CD8-positive, alpha-beta T cell (primary cell): ENCODE measurements at regions of chr3 and their contacts with region 1.

Region 1: DNA sequence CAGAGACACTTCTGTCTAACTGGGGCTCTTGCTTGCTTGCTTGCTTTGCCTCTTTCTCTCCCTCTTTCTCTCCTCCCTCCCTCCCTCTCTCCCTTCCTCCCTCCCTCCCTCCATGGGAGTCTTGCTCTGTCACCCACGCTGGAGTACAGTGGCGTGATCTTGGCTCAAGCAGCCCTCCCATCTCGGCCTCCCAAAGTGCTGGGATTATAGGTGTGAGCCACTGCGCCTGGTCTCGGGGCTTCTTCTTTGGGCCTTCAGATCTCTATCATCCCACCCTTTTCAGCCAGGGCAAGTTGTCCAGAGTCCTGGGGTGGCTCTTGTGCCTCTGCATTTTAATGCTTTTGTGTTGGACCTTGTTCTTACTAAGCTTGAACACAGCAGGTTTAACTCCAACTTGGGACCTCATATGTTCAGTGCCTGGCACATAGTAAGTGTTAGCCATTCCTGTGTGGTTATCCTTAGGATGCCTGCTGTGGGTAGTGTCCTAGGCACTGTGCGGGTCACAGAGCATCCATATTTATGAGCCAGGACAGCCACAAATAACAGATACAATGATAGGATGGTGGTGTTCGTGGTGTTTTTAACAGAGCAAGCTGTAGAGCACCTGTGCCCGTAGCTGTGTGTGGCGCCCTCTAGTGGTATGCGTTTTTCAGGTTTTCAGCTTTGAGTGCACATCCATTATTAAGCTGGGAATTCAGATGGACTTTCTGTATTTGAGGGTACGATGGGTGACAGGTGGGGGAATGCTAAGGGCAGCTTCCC is 75.1 kb downstream of the CCK start:
- DNase-seq: peak; percentile 44 to 84 (median 72)
- ATAC-seq: peak; percentile 61
- H3K4me3 ChIP-seq: no peak overlapping the region
- H3K4me3 Mint-ChIP-seq: no peak overlapping the region
- H3K27ac ChIP-seq: no peak overlapping the region
- H3K27ac Mint-ChIP-seq: no peak overlapping the region
- H3K4me1 ChIP-seq: peaks cover 15% of the 10 kb centered on the region
- H3K4me1 Mint-ChIP-seq: peaks cover 12% of the 10 kb centered on the region
- H3K27me3 ChIP-seq: no peaks in the 10 kb centered on the region
- H3K27me3 Mint-ChIP-seq: no peaks in the 10 kb centered on the region
- CTCF ChIP-seq: peak; percentile 90

Region 2: GRCh38 chr3:41893977-41894376 is 296.9 kb before region 1 on chr3:
- CTCF ChIA-PET with region 1: interaction called, 4 read pairs
- POLR2A ChIA-PET with region 1: no interaction called
- intact Hi-C with region 1: loop called in 1 of 2 experiments (anchors 1 kb)
- DNase-seq: peak in 2 of 9 experiments; percentile 48 to 58
- ATAC-seq: no peak
- H3K4me3 ChIP-seq: no peak overlapping the region
- H3K4me3 Mint-ChIP-seq: no peak overlapping the region
- H3K27ac ChIP-seq: no peak overlapping the region
- H3K27ac Mint-ChIP-seq: no peak overlapping the region
- H3K4me1 ChIP-seq: no peaks in the 10 kb centered on the region
- H3K4me1 Mint-ChIP-seq: no peaks in the 10 kb centered on the region
- H3K27me3 ChIP-seq: no peaks in the 10 kb centered on the region
- H3K27me3 Mint-ChIP-seq: no peaks in the 10 kb centered on the region
- CTCF ChIP-seq: peak; percentile 52

Region 3: GRCh38 chr3:42118762-42119361 is 72.0 kb before region 1 on chr3:
- CTCF ChIA-PET with region 1: interaction called, 32 read pairs
- POLR2A ChIA-PET with region 1: no interaction called
- intact Hi-C with region 1: loop called (anchors 1 kb)
- DNase-seq: peak in 2 of 9 experiments; percentile 31 to 49
- ATAC-seq: no peak
- H3K4me3 ChIP-seq: no peak overlapping the region
- H3K4me3 Mint-ChIP-seq: no peak overlapping the region
- H3K27ac ChIP-seq: no peak overlapping the region
- H3K27ac Mint-ChIP-seq: no peak overlapping the region
- H3K4me1 ChIP-seq: no peaks in the 10 kb centered on the region
- H3K4me1 Mint-ChIP-seq: peaks cover 18% of the 10 kb centered on the region
- H3K27me3 ChIP-seq: no peaks in the 10 kb centered on the region
- H3K27me3 Mint-ChIP-seq: no peaks in the 10 kb centered on the region
- CTCF ChIP-seq: no peak

Region 4: GRCh38 chr3:42179110-42179725 is 11.7 kb before region 1 on chr3:
- CTCF ChIA-PET with region 1: interaction called, 19 read pairs
- POLR2A ChIA-PET with region 1: no interaction called
- intact Hi-C with region 1: no loop called
- DNase-seq: no peak
- ATAC-seq: no peak
- H3K4me3 ChIP-seq: no peak overlapping the region
- H3K4me3 Mint-ChIP-seq: no peak overlapping the region
- H3K27ac ChIP-seq: no peak overlapping the region
- H3K27ac Mint-ChIP-seq: peak overlapping the region; percentile 55
- H3K4me1 ChIP-seq: no peaks in the 10 kb centered on the region
- H3K4me1 Mint-ChIP-seq: no peaks in the 10 kb centered on the region
- H3K27me3 ChIP-seq: no peaks in the 10 kb centered on the region
- H3K27me3 Mint-ChIP-seq: no peaks in the 10 kb centered on the region
- CTCF ChIP-seq: no peak

Region 5: DNA sequence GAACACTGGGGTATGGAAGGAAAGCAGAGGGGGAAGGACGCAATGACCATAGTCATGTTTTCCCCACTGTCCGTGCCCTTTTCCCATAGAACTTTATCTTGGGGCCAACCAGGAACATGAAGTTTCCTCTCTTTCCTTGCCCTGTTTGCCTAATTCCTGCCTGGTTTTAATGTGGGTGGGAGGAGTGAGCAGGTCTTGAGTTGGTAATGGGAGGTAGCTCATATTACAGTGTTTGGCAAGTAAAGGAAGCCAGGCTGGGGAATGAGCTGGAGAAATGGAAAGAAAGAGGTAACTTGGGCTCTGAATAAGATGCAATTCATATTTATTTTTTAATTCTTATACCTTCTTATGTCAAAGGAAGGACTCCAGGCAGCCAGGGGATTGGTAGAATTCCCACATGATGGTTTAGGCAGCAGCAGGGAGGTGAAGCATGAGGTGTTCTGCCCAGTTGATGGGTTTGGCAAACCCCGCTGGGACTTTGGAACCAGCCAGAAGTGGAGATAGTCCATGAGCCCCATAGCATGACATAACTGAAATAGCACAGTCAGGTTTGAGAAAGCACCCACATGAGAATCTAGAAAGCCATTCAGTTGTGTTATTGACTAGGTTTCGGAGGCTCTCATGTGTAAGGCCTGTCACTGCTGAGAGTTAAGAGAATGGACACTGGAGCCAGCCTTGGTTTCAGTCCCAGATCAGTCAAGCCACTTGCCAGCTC is 15.1 kb after region 1 on chr3:
- CTCF ChIA-PET with region 1: interaction called, 40 read pairs
- POLR2A ChIA-PET with region 1: no interaction called
- intact Hi-C with region 1: no loop called
- DNase-seq: no peak
- ATAC-seq: no peak
- H3K4me3 ChIP-seq: no peak overlapping the region
- H3K4me3 Mint-ChIP-seq: no peak overlapping the region
- H3K27ac ChIP-seq: no peak overlapping the region
- H3K27ac Mint-ChIP-seq: no peak overlapping the region
- H3K4me1 ChIP-seq: peaks cover 8% of the 10 kb centered on the region
- H3K4me1 Mint-ChIP-seq: peaks cover 6% of the 10 kb centered on the region
- H3K27me3 ChIP-seq: no peaks in the 10 kb centered on the region
- H3K27me3 Mint-ChIP-seq: no peaks in the 10 kb centered on the region
- CTCF ChIP-seq: no peak

Region 6: DNA sequence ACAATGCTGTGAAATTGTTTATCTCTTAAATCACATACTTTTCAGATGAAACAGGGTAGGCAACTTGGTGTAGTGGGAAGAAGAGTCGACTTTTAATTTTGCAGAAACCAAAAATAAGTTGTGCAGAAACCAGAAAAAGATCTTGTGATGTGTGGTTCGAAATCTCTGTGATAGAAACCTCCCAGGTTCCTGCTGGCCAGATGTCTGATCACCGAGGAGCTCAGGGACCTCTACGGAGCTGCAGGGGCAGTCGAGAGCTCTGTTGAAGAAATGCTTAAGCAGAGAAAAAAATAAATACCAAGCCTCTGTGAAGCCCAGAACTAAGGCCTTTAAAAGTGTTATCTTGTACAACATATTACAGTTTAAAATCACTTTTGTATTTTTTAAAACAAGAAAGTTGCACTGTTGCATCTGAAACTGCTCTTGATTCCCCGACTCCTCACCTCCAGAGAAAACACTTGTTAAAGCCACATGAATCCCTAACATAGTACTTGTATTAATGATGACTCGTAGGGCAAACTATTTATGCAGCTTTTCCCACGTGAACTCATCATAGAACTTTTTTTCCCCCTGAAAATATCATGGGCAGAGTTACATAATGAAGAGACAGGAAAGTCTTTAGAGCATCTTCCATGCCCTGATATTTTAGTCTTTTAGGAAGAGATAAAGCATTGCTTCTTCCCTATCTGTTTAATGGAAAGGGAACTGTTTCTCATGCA is 23.8 kb after region 1 on chr3:
- CTCF ChIA-PET with region 1: interaction called, 40 read pairs
- POLR2A ChIA-PET with region 1: no interaction called
- intact Hi-C with region 1: no loop called
- DNase-seq: peak in 1 of 9 experiments; percentile 32
- ATAC-seq: no peak
- H3K4me3 ChIP-seq: peak overlapping the region in 1 of 2 experiments; percentile 22
- H3K4me3 Mint-ChIP-seq: peak overlapping the region; percentile 30
- H3K27ac ChIP-seq: peak overlapping the region; percentile 28 to 63
- H3K27ac Mint-ChIP-seq: peak overlapping the region; percentile 78
- H3K4me1 ChIP-seq: peaks cover 60% of the 10 kb centered on the region
- H3K4me1 Mint-ChIP-seq: peaks cover 66% of the 10 kb centered on the region
- H3K27me3 ChIP-seq: no peaks in the 10 kb centered on the region
- H3K27me3 Mint-ChIP-seq: no peaks in the 10 kb centered on the region
- CTCF ChIP-seq: no peak

Region 7: GRCh38 chr3:42443819-42444436 is 253.0 kb after region 1 on chr3:
- CTCF ChIA-PET with region 1: interaction called, 10 read pairs
- POLR2A ChIA-PET with region 1: no interaction called
- intact Hi-C with region 1: no loop called
- DNase-seq: peak; percentile 67 to 91 (median 72)
- ATAC-seq: peak; percentile 82
- H3K4me3 ChIP-seq: no peak overlapping the region
- H3K4me3 Mint-ChIP-seq: no peak overlapping the region
- H3K27ac ChIP-seq: no peak overlapping the region
- H3K27ac Mint-ChIP-seq: no peak overlapping the region
- H3K4me1 ChIP-seq: no peaks in the 10 kb centered on the region
- H3K4me1 Mint-ChIP-seq: no peaks in the 10 kb centered on the region
- H3K27me3 ChIP-seq: no peaks in the 10 kb centered on the region
- H3K27me3 Mint-ChIP-seq: peaks cover 6% of the 10 kb centered on the region
- CTCF ChIP-seq: peak; percentile 95

Region 8: GRCh38 chr3:43531835-43532234 is 1341.0 kb after region 1 on chr3:
- CTCF ChIA-PET with region 1: no interaction called
- POLR2A ChIA-PET with region 1: no interaction called
- intact Hi-C with region 1: no loop called
- DNase-seq: no peak
- ATAC-seq: no peak
- H3K4me3 ChIP-seq: no peak overlapping the region
- H3K4me3 Mint-ChIP-seq: no peak overlapping the region
- H3K27ac ChIP-seq: no peak overlapping the region
- H3K27ac Mint-ChIP-seq: no peak overlapping the region
- H3K4me1 ChIP-seq: no peaks in the 10 kb centered on the region
- H3K4me1 Mint-ChIP-seq: no peaks in the 10 kb centered on the region
- H3K27me3 ChIP-seq: no peaks in the 10 kb centered on the region
- H3K27me3 Mint-ChIP-seq: no peaks in the 10 kb centered on the region
- CTCF ChIP-seq: no peak